Endothelial cell of umbilical vein (primary cell): ENCODE measurements at regions of chr2 and their contacts with region 1.

Region 1: DNA sequence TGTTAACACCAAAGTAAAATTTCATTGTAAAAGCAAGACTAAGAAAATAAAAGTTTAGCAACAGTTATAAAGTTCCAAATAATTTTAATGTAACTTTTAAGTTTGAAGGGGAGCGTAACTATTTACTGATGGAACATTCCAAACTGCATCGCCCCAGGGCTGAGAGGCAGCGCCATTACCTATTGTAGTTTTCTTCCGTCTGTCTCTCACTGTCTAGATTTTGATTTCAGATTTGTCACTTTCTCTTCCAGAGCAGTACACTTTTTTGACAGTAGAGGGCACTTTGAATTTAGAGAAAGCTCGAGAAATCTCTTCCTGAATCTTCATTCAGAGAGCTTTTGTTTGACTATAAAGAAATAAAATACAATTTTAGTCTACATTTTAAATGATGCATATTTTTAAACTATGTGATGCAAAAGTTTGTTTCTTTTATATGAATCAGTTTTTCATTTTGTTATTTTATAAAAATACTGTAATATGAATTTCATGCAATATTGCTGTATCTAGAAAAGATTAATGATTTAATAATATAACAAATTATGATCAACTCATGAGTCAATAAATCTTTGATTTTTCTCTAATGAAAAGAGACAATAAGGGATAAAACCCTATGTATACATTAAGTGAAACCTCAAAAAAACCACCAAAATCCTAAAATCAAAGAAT is 389.8 kb downstream of the FIGN start:
- DNase-seq: peak; percentile 80
- H3K4me3 ChIP-seq: no peak overlapping the region
- H3K27ac ChIP-seq: no peak overlapping the region
- H3K4me1 ChIP-seq: peaks cover 53% of the 10 kb centered on the region
- H3K27me3 ChIP-seq: no peaks in the 10 kb centered on the region
- CTCF ChIP-seq: peak; percentile 52 to 57
- POLR2A ChIP-seq: no peak

Region 2: GRCh38 chr2:163171786-163172531 is 174.1 kb before region 1 on chr2:
- CTCF ChIA-PET with region 1: interaction called, 14 read pairs
- POLR2A ChIA-PET with region 1: no interaction called
- dilution Hi-C with region 1: no loop called
- intact Hi-C with region 1: no loop called
- DNase-seq: no peak
- H3K4me3 ChIP-seq: no peak overlapping the region
- H3K27ac ChIP-seq: no peak overlapping the region
- H3K4me1 ChIP-seq: no peaks in the 10 kb centered on the region
- H3K27me3 ChIP-seq: no peaks in the 10 kb centered on the region
- CTCF ChIP-seq: no peak
- POLR2A ChIP-seq: no peak

Region 3: GRCh38 chr2:163471947-163472346 is 125.9 kb after region 1 on chr2:
- CTCF ChIA-PET with region 1: interaction called, 13 read pairs
- POLR2A ChIA-PET with region 1: no interaction called
- dilution Hi-C with region 1: no loop called
- intact Hi-C with region 1: loop called (anchors 2 kb)
- DNase-seq: peak; percentile 18
- H3K4me3 ChIP-seq: no peak overlapping the region
- H3K27ac ChIP-seq: no peak overlapping the region
- H3K4me1 ChIP-seq: no peaks in the 10 kb centered on the region
- H3K27me3 ChIP-seq: peaks cover 2 to 3% of the 10 kb centered on the region in 2 experiments
- CTCF ChIP-seq: peak in 1 of 2 donors; percentile 22
- POLR2A ChIP-seq: no peak

Region 4: GRCh38 chr2:163505281-163505680 is 159.2 kb after region 1 on chr2:
- CTCF ChIA-PET with region 1: no interaction called
- POLR2A ChIA-PET with region 1: no interaction called
- dilution Hi-C with region 1: no loop called
- intact Hi-C with region 1: no loop called
- DNase-seq: no peak
- H3K4me3 ChIP-seq: no peak overlapping the region
- H3K27ac ChIP-seq: no peak overlapping the region
- H3K4me1 ChIP-seq: no peaks in the 10 kb centered on the region
- H3K27me3 ChIP-seq: no peaks in the 10 kb centered on the region
- CTCF ChIP-seq: no peak
- POLR2A ChIP-seq: no peak

Region 5: DNA sequence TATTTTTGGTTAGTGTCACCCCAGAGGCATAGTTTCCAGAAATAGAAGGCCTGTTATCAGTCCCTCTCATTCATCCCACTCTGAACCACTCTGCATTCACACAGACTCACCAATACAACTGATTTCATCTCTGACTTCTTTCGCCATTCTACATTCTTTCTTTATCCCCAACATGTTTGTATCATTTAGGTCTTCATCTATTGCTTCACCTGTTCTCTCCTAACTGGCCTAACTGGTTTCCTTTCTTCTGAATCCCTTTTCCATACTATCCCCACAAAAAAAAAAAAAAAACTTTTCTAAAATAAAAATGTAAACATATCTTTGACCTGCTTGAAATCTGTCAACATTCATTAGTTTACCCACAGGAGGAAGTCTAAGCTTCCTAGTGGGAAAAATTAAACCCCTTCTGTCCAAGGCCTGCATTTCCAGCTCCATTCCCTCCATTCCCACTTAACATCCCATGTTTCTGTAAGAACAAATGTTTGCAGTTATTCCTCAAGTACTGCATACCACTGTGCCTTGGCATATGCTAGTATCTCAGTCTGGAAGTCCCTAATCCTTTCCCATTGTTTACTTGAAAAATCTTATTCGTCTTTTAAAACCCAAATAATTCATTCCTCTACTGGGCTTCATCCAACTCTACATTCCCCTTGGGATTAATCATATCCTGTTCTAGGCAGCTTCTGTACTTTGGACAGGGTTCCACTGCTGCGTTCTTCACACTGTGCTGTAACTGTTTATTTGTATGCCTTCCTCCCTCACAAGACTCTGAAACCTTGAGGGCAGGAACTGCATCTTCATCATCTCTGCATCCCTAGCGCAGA is 321.2 kb after region 1 on chr2:
- CTCF ChIA-PET with region 1: interaction called, 3 read pairs
- POLR2A ChIA-PET with region 1: interaction called, 5 read pairs
- dilution Hi-C with region 1: no loop called
- intact Hi-C with region 1: loop called (anchors 1 kb)
- DNase-seq: peak; percentile 96
- H3K4me3 ChIP-seq: no peak overlapping the region
- H3K27ac ChIP-seq: peak overlapping the region; percentile 9
- H3K4me1 ChIP-seq: peaks cover 28% of the 10 kb centered on the region
- H3K27me3 ChIP-seq: no peaks in the 10 kb centered on the region
- CTCF ChIP-seq: no peak
- POLR2A ChIP-seq: no peak

Region 6: GRCh38 chr2:163878531-163879117 is 532.6 kb after region 1 on chr2:
- CTCF ChIA-PET with region 1: interaction called, 26 read pairs
- POLR2A ChIA-PET with region 1: no interaction called
- dilution Hi-C with region 1: no loop called
- intact Hi-C with region 1: loop called (anchors 1 kb)
- DNase-seq: peak; percentile 28
- H3K4me3 ChIP-seq: no peak overlapping the region
- H3K27ac ChIP-seq: no peak overlapping the region
- H3K4me1 ChIP-seq: no peaks in the 10 kb centered on the region
- H3K27me3 ChIP-seq: no peaks in the 10 kb centered on the region
- CTCF ChIP-seq: peak; percentile 52 to 61
- POLR2A ChIP-seq: no peak

Region 7: GRCh38 chr2:164495491-164496223 is 1149.6 kb after region 1 on chr2:
- CTCF ChIA-PET with region 1: no interaction called
- POLR2A ChIA-PET with region 1: no interaction called
- dilution Hi-C with region 1: no loop called
- intact Hi-C with region 1: loop called (anchors 10 kb)
- DNase-seq: peak; percentile 44
- H3K4me3 ChIP-seq: no peak overlapping the region
- H3K27ac ChIP-seq: no peak overlapping the region
- H3K4me1 ChIP-seq: peaks cover 7% of the 10 kb centered on the region
- H3K27me3 ChIP-seq: no peaks in the 10 kb centered on the region
- CTCF ChIP-seq: peak; percentile 34 to 41
- POLR2A ChIP-seq: no peak